Aorta (tissue), 5 donors: ENCODE measurements at regions of chr4 and their contacts with region 1.

Region 1: DNA sequence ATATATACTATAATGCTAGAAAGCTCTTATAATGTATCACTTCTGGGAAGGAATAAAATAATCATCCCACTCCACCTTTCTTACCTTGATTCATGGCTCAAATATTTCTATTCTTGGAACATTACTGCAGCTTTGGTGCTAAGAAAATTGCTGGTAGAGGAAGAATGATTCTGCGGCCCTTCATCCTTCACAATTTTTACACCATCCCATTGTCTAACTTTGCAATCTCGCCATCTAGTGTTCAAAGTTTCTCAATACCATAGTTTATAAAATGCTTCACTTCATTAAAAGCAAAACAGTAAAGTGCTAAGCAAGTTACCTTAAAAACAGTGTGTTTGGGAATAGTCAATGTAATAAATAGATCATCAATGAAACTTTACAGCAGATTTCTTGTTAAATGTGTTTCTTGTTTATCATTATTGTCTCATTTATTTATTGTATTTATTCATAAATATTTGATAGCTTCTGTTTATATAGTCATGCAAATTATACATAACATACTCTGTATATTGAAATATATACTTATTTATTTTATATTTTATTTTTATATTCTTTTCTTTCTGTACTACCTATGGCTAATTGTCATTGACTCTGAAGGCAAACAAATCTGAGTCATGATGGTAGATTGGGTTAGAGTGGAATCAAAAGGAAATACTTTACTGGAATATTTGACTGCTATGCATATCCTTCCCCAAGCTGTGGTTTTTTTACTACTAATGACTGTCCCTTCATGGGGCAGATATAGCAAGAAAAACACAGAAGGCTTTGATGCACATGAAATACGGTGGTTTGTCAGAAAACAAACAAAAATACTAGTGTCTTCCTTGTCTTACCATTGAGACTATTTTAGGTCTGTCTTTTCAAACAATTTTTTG is 390.7 kb downstream of the MAPK10 start:
- DNase-seq: no peak
- ATAC-seq: peak; percentile 68
- H3K4me3 ChIP-seq: no peak overlapping the region
- H3K27ac ChIP-seq: no peak overlapping the region
- H3K4me1 ChIP-seq: peaks cover 2 to 5% of the 10 kb centered on the region in 2 donors
- H3K27me3 ChIP-seq: no peaks in the 10 kb centered on the region

Region 2: DNA sequence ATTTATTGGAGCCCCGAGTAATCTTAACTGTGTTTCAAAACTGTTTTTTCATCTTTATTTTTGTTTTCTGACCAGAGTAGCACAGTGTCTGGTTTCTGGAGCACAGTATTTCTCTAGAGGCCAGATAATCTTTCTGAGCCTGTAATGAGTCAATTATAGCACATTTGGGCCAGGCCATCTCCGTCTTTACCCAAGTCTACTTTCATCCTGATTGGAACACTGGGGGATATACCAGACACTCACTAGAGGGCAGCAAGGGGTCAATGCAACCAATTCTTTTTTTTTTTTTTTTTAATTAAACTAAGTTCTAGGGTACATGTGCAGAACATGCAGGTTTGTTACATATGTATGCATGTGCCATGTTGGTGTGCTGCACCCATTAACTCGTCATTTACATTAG is 212.2 kb before region 1 on chr4:
- intact Hi-C with region 1: loop called in 1 of 2 experiments (anchors 5 kb)
- DNase-seq: no peak
- ATAC-seq: no peak
- H3K4me3 ChIP-seq: no peak overlapping the region
- H3K27ac ChIP-seq: no peak overlapping the region
- H3K4me1 ChIP-seq: peaks cover 0 to 5% of the 10 kb centered on the region in 2 donors
- H3K27me3 ChIP-seq: no peaks in the 10 kb centered on the region

Region 3: DNA sequence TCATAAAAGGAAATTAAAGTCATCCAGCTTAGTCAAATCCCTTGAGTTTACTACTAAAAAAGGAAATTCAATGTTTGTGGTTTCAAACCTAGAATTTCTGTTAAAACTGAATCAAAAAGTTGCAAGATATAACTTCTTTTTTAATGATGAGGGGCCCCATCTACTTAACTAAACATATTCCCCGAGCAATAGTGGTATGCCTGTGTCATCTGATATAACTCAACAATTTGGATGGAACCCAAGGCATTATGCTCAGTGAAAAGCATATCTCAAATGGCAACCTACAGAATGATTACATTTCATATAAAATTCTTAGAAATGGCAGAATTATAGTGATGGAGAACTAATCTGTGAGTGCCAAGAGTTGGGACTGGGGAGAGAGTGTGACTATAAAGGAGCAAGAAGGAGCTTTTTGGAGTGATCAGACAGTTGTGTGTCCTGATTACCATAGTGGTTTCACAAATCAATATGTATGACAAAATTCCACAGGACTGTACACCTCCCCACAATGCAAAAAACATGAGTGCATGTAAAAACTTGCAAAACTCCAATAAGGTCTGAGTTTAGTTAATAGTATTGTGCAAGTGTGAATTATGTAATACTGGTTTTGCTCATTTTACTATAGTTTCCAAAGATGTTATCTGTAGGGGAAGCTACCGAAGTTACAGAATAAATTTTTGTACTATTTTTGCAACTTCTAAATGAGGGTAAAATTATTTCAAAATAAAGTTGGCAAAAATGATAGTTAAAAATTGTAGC is 171.0 kb before region 1 on chr4:
- intact Hi-C with region 1: loop called (anchors 2 kb)
- DNase-seq: no peak
- ATAC-seq: no peak
- H3K4me3 ChIP-seq: no peak overlapping the region
- H3K27ac ChIP-seq: no peak overlapping the region
- H3K4me1 ChIP-seq: peaks cover 0 to 1% of the 10 kb centered on the region in 2 donors
- H3K27me3 ChIP-seq: no peaks in the 10 kb centered on the region

Region 4: GRCh38 chr4:85826060-85826678 is 143.0 kb before region 1 on chr4:
- intact Hi-C with region 1: loop called in 1 of 2 experiments (anchors 10 kb)
- DNase-seq: peak in 1 of 2 donors; percentile 42
- ATAC-seq: peak; percentile 70
- H3K4me3 ChIP-seq: no peak overlapping the region
- H3K27ac ChIP-seq: peak overlapping the region in 1 of 2 donors; percentile 33
- H3K4me1 ChIP-seq: peaks cover 5 to 7% of the 10 kb centered on the region in 2 donors
- H3K27me3 ChIP-seq: no peaks in the 10 kb centered on the region

Region 5: DNA sequence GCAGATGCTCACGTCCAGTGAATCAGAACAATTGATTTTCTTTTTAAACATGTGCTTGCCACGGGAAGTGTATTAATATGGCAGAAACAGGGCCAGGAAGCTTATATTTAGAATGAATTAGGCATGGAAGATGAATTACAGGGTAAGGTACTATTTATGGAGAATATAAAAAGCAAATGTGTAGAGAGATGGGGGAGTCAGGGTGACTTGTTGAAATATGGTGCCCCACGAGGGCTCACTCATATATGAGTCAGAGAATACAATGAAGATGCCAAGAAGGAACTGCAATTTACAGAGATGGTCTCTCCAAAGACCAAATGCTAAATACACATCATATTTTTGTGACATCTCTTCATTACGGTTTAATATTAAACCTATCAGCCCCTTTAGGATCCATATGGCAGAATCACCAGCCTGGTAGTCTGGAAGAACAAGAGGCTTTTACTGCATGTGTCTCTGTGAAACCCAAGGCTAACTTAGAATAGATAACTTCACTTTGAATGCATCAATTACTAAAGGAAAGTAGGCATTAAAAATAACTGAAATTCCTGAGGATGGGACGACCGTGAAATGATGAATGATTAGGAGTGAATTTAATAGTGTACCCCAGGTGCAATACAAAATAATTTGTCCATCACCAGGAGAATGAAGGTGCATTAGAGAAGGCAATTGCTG is 109.0 kb before region 1 on chr4:
- intact Hi-C with region 1: loop called in 1 of 2 experiments (anchors 10 kb)
- DNase-seq: no peak
- ATAC-seq: no peak
- H3K4me3 ChIP-seq: no peak overlapping the region
- H3K27ac ChIP-seq: peak overlapping the region in 1 of 2 donors; percentile 9
- H3K4me1 ChIP-seq: peaks cover 2 to 5% of the 10 kb centered on the region in 2 donors
- H3K27me3 ChIP-seq: no peaks in the 10 kb centered on the region

Region 6: DNA sequence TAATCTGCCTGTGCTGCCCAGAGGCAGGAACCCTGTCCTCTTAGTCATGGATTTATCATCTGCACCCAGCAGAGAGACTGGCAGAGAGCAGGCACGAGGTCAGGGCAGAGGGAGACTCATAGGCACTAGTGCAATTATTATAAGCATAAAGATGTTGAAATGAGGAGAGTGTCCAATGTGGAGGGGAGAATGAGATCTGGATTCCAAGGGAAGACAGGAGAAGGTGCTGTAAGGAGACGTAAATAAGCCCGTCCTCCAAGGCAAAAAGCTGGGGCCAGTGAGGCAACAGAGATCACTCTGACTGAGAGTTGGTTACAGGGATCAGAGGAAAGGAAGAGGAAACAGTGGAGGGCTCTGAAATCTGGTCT is 15.5 kb before region 1 on chr4:
- intact Hi-C with region 1: no loop called
- DNase-seq: no peak
- ATAC-seq: no peak
- H3K4me3 ChIP-seq: no peak overlapping the region
- H3K27ac ChIP-seq: no peak overlapping the region
- H3K4me1 ChIP-seq: no peaks in the 10 kb centered on the region
- H3K27me3 ChIP-seq: no peaks in the 10 kb centered on the region